Posterior vena cava (tissue), 2 donors: ENCODE measurements at regions of chr1 and their contacts with region 1.

Region 1: DNA sequence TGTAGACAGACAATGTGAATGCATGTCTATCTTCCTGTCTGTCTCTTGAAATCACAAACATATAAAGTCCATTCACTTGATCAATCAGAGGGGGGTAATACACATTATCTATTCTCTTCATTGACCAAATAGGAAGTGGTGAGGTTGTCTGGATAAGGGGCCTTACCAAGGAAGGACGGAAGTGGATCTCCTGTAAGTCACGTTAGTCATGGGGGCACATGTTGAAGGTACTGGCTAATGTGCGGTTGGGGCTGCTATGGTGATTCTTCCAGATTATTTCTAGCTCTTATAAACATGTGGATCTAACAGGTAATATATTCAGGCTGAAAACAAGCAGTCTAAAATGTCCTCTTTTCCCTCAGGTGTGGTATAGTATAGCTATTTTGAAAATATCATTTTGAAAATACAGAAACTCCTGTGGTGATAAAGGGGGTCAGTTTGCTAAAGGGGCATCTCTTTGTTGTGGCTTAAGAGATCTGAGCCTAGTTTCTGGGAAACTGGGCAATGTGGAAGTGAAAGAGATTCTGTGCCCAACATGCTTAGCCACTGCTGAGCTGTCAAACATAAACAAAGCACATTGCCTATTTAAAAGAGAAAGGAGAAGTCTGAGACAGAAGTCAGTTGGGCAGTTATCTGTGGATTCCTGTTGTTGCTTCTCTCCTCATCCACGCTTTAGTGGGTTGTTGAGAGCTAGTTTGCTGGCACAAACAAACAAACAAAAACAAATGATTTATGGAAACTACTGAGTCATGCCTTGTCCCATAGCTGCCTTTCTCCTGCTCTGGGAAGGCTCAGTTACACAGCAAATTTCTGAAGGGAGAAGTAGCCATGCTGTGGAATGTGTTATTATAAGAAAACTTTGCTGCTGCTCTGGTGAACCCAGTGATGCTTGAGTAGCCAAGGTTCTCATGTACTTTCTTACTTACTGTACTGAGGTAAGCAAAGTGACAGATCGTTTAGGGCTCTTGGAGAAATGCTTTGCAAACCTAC is 166.9 kb downstream of the HLX start:
- DNase-seq: no peak

Region 2: DNA sequence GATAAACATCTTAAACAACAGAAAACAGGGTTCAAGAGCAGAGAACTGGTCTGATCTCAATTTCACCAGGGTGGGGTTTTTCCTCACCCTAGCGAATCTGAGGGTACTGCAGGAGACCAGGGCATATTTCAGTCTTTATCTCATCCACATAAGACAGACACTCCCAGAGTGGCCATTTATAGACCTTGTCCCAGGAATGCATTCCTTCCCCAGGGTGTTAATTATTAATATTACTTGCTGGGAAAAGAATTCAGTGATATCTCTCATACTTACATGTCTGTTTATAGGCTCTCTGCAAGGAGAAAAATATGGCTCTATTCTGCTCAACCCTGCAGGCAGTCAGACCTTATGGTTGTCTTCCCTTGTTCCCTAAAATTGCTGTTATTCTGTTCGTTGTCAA is 1788.4 kb before region 1 on chr1:
- intact Hi-C with region 1: loop called in 1 of 2 experiments (anchors 10 kb)
- DNase-seq: no peak